GM12878 (cell line): ENCODE measurements at regions of chr2 and their contacts with region 1.

Region 1: GRCh38 chr2:136255648-136256463 is 137.9 kb upstream of the CXCR4 start:
- DNase-seq: no peak
- ATAC-seq: peak; percentile 78
- H3K4me3 ChIP-seq: no peak overlapping the region
- H3K27ac ChIP-seq: no peak overlapping the region
- H3K4me1 ChIP-seq: peaks cover 12% of the 10 kb centered on the region
- H3K27me3 ChIP-seq: no peaks in the 10 kb centered on the region; a peak in 1 of 4 replicates
- CTCF ChIP-seq: peak in 2 of 3 experiments; percentile 9 to 27; a peak in 3 of 6 replicates
- EP300 ChIP-seq: peak in 1 of 2 experiments; percentile 63; a peak in 1 of 4 replicates
- POLR2A ChIP-seq: no peak
- RAD21 ChIP-seq: no peak

Region 2: DNA sequence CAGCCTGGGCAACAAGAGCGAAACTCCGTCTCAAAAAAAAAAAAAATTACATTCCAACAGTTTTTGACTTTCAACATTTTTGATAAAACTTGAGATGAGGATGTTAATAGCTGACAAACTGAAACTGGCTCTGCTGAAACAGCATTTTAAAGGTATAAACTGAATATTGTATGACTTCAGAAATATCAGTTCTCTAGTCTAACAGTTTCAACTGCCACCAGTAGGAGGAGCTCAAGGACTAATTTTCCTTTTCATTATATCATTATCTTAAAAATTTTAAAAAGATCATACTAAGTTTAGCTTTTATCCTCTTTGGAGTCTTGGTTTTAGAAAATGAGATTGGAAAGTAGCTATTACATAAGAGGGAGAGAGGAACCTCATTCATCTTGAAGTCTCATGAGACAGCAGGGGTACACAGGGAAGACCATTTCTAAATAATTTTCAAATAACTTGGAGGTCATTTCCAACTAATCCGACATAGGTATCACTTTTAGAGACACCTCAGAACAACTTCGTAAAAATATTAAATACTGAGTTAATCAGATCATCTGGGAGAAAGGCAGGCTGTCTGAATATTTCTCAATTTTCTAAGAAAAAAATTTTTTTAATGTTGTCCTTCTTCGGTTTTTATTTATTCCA is 342.0 kb before region 1 on chr2:
- CTCF ChIA-PET with region 1: interaction called, 16 read pairs
- POLR2A ChIA-PET with region 1: no interaction called
- RAD21 ChIA-PET with region 1: interaction called, 6 read pairs
- SMC1A ChIA-PET with region 1: interaction called, 6 read pairs
- in situ Hi-C with region 1: no loop called
- intact Hi-C with region 1: no loop called
- DNase-seq: no peak
- ATAC-seq: peak; percentile 75
- H3K4me3 ChIP-seq: no peak overlapping the region
- H3K27ac ChIP-seq: no peak overlapping the region
- H3K4me1 ChIP-seq: no peaks in the 10 kb centered on the region
- H3K27me3 ChIP-seq: no peaks in the 10 kb centered on the region
- CTCF ChIP-seq: peak; percentile 58 to 68 (median 63); a peak in 5 of 6 replicates
- EP300 ChIP-seq: no peak
- POLR2A ChIP-seq: no peak
- RAD21 ChIP-seq: peak; percentile 75

Region 3: DNA sequence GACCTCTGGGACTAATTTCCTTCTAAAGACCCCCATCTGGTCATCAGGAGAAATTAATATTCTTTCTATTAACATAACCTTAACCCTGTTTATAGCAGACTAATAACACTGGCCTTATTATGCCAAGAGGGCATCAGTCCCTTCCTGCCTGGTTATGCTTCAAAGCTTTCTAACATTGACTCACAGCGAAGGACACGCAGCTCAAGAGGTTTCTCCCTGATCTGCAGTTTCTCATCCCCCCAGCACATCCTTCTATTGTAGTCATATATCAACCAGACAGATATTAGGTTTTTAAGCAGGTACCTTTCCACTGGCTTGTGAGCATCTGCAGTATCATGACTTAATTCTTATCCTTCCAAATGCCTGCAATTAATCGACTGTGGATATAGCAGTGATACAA is 37.9 kb before region 1 on chr2:
- CTCF ChIA-PET with region 1: interaction called, 11 read pairs
- POLR2A ChIA-PET with region 1: interaction called, 19 read pairs
- RAD21 ChIA-PET with region 1: interaction called, 69 read pairs
- SMC1A ChIA-PET with region 1: interaction called, 65 read pairs
- in situ Hi-C with region 1: no loop called
- intact Hi-C with region 1: no loop called
- DNase-seq: no peak
- ATAC-seq: peak; percentile 77
- H3K4me3 ChIP-seq: no peak overlapping the region
- H3K27ac ChIP-seq: no peak overlapping the region
- H3K4me1 ChIP-seq: no peaks in the 10 kb centered on the region
- H3K27me3 ChIP-seq: peaks cover 0 to 9% of the 10 kb centered on the region in 2 experiments; a peak in 1 of 4 replicates
- CTCF ChIP-seq: no peak
- EP300 ChIP-seq: peak in 1 of 2 experiments; percentile 40; a peak in 1 of 4 replicates
- POLR2A ChIP-seq: no peak
- RAD21 ChIP-seq: no peak

Region 4: DNA sequence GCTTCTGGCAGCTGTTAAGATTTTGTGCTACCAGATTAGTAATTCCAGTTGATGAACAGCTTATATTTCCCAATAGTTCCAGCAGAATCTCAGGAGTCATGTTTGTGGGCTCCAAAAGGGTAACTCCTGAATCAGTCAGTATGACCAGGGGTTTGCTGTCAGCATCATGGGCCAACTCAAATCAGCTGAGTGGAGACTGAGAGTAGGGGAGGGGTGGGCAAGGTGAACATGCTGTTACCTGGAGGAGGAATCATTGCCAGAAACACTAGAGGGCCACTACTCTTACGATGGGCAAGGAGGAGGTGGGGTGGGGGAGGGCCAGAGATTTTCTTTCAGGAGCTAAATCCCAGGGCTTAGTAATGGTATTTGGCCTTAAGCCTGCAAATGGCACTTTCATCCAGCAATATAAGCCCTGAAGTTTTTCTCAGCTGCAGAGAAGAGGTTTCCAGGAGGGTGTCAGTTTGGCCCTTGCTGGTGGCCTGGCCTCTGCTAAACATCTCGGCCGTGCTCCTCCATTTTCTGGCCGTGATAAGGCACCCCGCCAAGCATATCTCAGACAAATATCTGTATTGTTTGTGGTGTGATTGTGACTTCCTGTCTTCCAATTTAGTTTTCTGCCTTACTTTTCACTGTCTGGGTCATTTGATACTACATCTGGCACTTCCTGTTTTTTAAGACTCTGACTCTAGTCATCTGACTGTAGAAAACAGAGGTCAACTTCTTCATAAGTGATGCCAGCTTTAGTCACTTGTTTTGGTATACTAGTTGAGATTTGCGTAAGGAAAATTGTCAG is 17.4 kb before region 1 on chr2:
- CTCF ChIA-PET with region 1: interaction called, 42 read pairs
- POLR2A ChIA-PET with region 1: interaction called, 47 read pairs
- RAD21 ChIA-PET with region 1: interaction called, 50 read pairs
- SMC1A ChIA-PET with region 1: interaction called, 92 read pairs
- in situ Hi-C with region 1: no loop called
- intact Hi-C with region 1: no loop called
- DNase-seq: peak; percentile 78
- ATAC-seq: peak; percentile 89
- H3K4me3 ChIP-seq: no peak overlapping the region
- H3K27ac ChIP-seq: no peak overlapping the region
- H3K4me1 ChIP-seq: peaks cover 18% of the 10 kb centered on the region
- H3K27me3 ChIP-seq: no peaks in the 10 kb centered on the region
- CTCF ChIP-seq: no peak
- EP300 ChIP-seq: peak; percentile 97 to 99
- POLR2A ChIP-seq: no peak
- RAD21 ChIP-seq: no peak

Region 5: GRCh38 chr2:136305517-136306192 is 49.8 kb after region 1 on chr2:
- CTCF ChIA-PET with region 1: interaction called, 8 read pairs
- POLR2A ChIA-PET with region 1: interaction called, 14 read pairs
- RAD21 ChIA-PET with region 1: interaction called, 58 read pairs
- SMC1A ChIA-PET with region 1: interaction called, 65 read pairs
- in situ Hi-C with region 1: no loop called
- intact Hi-C with region 1: loop called (anchors 1 kb)
- DNase-seq: no peak
- ATAC-seq: peak; percentile 93
- H3K4me3 ChIP-seq: no peak overlapping the region
- H3K27ac ChIP-seq: no peak overlapping the region
- H3K4me1 ChIP-seq: peaks cover 6% of the 10 kb centered on the region
- H3K27me3 ChIP-seq: peaks cover 0 to 5% of the 10 kb centered on the region in 2 experiments; a peak in 1 of 4 replicates
- CTCF ChIP-seq: no peak
- EP300 ChIP-seq: peak; percentile 62 to 64; a peak in 1 of 4 replicates
- POLR2A ChIP-seq: no peak
- RAD21 ChIP-seq: no peak

Region 6: GRCh38 chr2:136327162-136327852 is 71.5 kb after region 1 on chr2:
- CTCF ChIA-PET with region 1: interaction called, 25 read pairs
- POLR2A ChIA-PET with region 1: interaction called, 7 read pairs
- RAD21 ChIA-PET with region 1: interaction called, 50 read pairs
- SMC1A ChIA-PET with region 1: interaction called, 79 read pairs
- in situ Hi-C with region 1: no loop called
- intact Hi-C with region 1: loop called (anchors 5 kb)
- DNase-seq: peak; percentile 71
- ATAC-seq: peak; percentile 89
- H3K4me3 ChIP-seq: peak overlapping the region; percentile 37; the same call in 1 of the 2 replicates
- H3K27ac ChIP-seq: no peak overlapping the region
- H3K4me1 ChIP-seq: peaks cover 26% of the 10 kb centered on the region
- H3K27me3 ChIP-seq: 0 out of 4 replicates have a peak, but pooled peaks cover 0 to 2% of the 10 kb centered on the region in 2 experiments
- CTCF ChIP-seq: no peak
- EP300 ChIP-seq: peak; percentile 95 to 96; a peak in 3 of 4 replicates
- POLR2A ChIP-seq: no peak
- RAD21 ChIP-seq: no peak